Activated T-helper 1 cell treated with anti-CD3 and anti-CD28 coated beads, Interleukin-12 subunit alpha, Interleukin-12 subunit beta, Interleukin-2, Interleukin-4 antibody, amounts not matched to agents 30 ng/mL and 10 ng/mL and 1 ng/mL, durations not matched to agents 14 hours and 24 hours and 36 hours (primary cell): ENCODE measurements at regions of chr4 and their contacts with region 1.

Region 1: DNA sequence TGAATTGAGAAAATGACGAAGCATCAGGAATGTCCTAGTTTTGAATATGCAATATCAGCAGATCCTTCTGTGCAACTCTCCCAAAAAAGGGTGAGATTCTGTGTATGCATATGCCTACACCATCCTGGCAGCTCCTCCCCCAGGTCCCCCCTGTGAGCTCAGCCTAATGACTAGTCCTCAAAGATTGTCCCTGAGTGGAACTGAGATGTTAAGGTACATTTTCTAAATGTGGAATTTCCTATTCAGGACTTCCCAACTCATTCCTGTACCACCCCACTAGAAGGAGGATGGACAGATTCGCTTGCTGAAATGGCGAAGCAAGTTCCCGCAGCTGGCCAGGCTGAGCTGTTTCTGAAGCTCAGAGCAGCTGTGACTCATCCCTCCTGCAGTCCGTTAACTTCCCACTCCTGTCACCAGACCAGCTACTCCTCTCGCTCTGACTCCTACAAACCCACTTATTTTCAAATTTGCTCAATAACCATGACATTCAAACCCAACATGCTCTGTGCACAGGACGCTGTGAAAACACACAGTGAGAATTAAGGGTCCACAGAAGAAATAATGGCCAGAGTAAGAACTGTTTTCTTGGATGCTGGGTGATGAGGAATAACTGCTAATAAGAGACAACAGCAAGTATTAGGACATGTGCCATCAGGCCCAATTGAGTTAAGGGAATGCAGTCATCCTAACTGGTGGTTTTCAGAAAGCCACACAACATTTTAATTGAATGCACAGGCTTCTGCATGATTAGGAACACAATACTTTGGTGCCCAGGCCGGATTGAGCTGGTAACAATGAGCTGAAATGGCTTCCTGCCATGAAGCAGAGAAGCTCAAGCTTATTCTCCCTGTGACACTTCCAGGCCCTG is 40.0 kb upstream of the IRF2 start:
- DNase-seq: peak; percentile 56
- H3K4me3 Mint-ChIP-seq: peak overlapping the region; percentile 46
- H3K27ac Mint-ChIP-seq: peak overlapping the region; percentile 93
- H3K4me1 Mint-ChIP-seq: peaks cover 56% of the 10 kb centered on the region
- H3K27me3 Mint-ChIP-seq: no peaks in the 10 kb centered on the region

Region 2: GRCh38 chr4:184282251-184282713 is 232.1 kb before region 1 on chr4:
- intact Hi-C with region 1: loop called (anchors 1 kb)
- DNase-seq: peak; percentile 53
- H3K4me3 Mint-ChIP-seq: peak overlapping the region; percentile 50
- H3K27ac Mint-ChIP-seq: peak overlapping the region; percentile 87
- H3K4me1 Mint-ChIP-seq: peaks cover 75% of the 10 kb centered on the region
- H3K27me3 Mint-ChIP-seq: no peaks in the 10 kb centered on the region

Region 3: DNA sequence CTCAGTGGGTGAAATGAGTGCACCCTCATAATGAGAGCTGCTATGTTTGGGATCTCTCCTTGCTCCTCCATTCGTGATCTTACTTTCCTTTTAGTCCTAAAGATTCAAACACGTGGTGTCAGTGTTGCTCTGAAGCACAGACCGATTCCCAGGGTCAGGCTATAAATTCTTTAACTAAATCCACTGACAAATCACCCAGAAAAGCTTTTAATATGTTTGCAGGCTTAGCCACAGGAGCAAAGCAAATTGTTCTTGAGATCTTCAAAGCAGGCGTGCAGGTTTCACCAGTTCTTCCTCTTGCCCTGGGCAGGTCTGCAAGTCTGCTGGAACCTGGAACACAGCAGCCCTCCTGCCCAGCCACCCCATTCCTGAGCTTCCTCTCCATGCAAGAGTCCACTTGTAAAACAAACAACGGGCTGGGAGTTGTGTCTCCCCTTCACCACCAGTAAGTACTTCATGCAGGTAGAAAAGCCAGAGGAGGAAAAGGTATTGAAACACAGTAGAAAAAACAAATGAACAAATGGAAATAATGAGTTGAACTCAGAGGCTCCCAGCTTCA is 226.6 kb before region 1 on chr4:
- intact Hi-C with region 1: loop called (anchors 1 kb)
- DNase-seq: no peak
- H3K4me3 Mint-ChIP-seq: peak overlapping the region; percentile 12
- H3K27ac Mint-ChIP-seq: peak overlapping the region; percentile 13
- H3K4me1 Mint-ChIP-seq: peaks cover 53% of the 10 kb centered on the region
- H3K27me3 Mint-ChIP-seq: no peaks in the 10 kb centered on the region

Region 4: GRCh38 chr4:184459413-184459812 is 54.9 kb before region 1 on chr4:
- intact Hi-C with region 1: loop called (anchors 1 kb)
- DNase-seq: no peak
- H3K4me3 Mint-ChIP-seq: peak overlapping the region; percentile 35
- H3K27ac Mint-ChIP-seq: peak overlapping the region; percentile 83
- H3K4me1 Mint-ChIP-seq: peaks cover 82% of the 10 kb centered on the region
- H3K27me3 Mint-ChIP-seq: no peaks in the 10 kb centered on the region

Region 5: DNA sequence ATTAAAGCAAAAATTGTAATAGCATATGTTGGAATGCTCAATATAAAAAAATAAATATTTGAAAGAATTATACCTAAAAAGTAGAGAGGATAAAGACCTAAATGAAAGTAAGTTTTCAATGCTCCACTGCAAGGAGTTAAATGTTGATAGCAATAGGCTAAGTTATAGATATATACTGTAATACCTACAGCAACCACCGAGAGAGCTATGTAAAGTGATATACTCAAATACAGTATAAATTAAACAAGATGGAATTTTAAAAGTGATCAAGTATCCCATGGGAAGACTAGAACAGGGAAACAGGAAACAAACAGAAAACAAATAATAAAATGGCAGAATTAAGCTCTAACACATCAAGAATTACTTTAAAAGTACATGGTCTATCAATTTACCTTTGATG is 61.0 kb after region 1 on chr4:
- intact Hi-C with region 1: loop called (anchors 1 kb)
- DNase-seq: no peak
- H3K4me3 Mint-ChIP-seq: no peak overlapping the region
- H3K27ac Mint-ChIP-seq: peak overlapping the region; percentile 55
- H3K4me1 Mint-ChIP-seq: peaks cover 19% of the 10 kb centered on the region
- H3K27me3 Mint-ChIP-seq: no peaks in the 10 kb centered on the region

Region 6: DNA sequence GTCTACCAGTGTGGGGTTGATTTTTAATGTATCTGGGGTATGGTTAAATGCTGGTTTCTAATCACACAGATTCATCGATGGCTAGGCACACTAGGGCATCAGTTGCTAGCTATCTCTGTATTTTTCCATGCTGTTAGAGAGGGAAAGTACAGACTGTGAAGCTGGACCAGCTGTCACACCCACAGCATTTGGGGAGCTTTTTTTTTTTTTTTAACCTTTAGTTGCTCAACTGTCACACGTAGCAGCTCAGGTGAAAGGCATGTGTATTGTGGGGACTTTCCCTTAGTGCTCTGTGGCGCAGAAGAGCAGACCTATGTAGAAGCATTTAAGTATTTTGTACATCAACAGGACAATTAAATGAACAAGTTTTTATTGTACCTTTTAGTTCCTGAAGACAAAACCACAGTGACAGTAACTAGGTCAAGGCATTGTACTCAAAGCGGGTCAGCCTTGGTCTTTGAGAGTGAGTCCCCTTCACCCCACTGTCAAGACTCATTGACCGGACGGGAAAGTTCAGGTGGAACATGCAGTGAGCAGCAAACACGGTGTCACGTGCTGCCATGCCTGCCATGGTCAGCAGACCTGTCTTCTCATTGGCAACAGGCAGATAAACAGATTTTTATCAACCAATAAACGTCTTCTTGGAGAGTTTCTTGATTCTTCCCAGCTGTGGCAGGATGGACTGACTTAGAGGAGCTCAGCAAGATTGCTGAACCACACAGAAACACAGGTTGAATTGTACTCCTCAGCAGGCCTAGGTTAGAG is 69.6 kb after region 1 on chr4:
- intact Hi-C with region 1: loop called (anchors 2 kb)
- DNase-seq: peak; percentile 9
- H3K4me3 Mint-ChIP-seq: peak overlapping the region; percentile 20
- H3K27ac Mint-ChIP-seq: peak overlapping the region; percentile 79
- H3K4me1 Mint-ChIP-seq: peaks cover 25% of the 10 kb centered on the region
- H3K27me3 Mint-ChIP-seq: no peaks in the 10 kb centered on the region